ENCODE measurements at regions of chr1 and their contacts with region 1.

Region 1: GRCh38 chr1:175274368-175274767 is 81.8 kb upstream of the KIAA0040 start:
- DNase-seq: no peak
- ATAC-seq: no peak
- H3K4me3 ChIP-seq: no peak overlapping the region
- H3K27ac ChIP-seq: no peak overlapping the region
- H3K4me1 ChIP-seq: peaks cover 0 to 22% (median 4%) of the 10 kb centered on the region in 12 donors
- H3K27me3 ChIP-seq: no peaks in the 10 kb centered on the region
- CTCF ChIP-seq: no peak
- POLR2A ChIP-seq: no peak

Region 2: DNA sequence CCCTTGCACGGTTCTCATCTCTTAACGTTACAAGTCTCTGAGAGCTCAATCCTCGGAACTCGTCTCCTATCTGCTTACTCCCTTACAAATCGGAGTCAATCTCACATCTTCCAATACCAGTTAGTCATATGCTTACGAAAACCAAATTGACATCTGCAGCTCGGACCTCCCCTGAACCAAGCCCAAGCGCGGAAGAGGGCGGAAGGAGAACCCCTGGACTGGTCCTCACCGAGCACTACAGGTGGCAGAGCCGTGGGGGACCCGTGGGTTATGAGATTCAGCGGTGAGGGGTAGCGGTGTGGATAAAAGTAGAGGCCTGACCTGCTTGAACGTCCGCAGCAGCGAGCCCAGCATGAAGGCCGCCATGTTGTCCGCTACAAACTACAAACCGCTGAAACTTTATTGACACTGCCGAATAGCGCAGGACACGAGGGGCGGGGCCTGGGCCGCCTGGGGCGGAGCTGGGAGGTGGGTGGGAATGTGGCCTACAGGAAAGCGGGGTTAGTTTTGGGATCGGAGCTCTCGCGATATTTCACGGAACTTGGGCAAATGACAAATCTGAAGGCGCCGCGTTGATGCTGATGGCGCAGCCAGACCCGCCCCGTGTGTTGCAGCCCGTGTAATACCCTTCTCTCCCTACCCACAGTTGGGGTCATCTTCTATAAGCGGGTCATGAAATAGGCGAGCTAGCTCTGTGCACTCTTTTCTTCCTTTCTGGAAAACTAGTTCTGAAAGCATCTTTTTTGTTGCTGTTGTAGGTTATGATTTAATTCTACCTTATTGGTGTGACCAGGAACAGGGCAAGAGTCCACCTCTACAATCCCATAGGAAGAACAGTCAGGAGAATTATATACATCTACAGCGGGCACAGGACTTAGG is 251.1 kb before region 1 on chr1 and contains the start of gene MRPS14:
- intact Hi-C with region 1: no loop called
- DNase-seq: peak; percentile 97 to 98 (median 98)
- ATAC-seq: peak; percentile 97 to 100 (median 99)
- H3K4me3 ChIP-seq: peak within 1 kb of the TSS; percentile 70 to 96 (median 92)
- H3K27ac ChIP-seq: peak within 1 kb of the TSS; percentile 54 to 90 (median 81)
- H3K4me1 ChIP-seq: peaks cover 0 to 27% (median 16%) of the 10 kb centered on the region in 12 donors
- H3K27me3 ChIP-seq: no peaks in the 10 kb centered on the region
- CTCF ChIP-seq: no peak
- POLR2A ChIP-seq: peak in 1 of 2 donors; percentile 70
- total RNA-seq, gene MRPS14: 15.5 to 27.0 (median 22.7) TPM

Region 3: DNA sequence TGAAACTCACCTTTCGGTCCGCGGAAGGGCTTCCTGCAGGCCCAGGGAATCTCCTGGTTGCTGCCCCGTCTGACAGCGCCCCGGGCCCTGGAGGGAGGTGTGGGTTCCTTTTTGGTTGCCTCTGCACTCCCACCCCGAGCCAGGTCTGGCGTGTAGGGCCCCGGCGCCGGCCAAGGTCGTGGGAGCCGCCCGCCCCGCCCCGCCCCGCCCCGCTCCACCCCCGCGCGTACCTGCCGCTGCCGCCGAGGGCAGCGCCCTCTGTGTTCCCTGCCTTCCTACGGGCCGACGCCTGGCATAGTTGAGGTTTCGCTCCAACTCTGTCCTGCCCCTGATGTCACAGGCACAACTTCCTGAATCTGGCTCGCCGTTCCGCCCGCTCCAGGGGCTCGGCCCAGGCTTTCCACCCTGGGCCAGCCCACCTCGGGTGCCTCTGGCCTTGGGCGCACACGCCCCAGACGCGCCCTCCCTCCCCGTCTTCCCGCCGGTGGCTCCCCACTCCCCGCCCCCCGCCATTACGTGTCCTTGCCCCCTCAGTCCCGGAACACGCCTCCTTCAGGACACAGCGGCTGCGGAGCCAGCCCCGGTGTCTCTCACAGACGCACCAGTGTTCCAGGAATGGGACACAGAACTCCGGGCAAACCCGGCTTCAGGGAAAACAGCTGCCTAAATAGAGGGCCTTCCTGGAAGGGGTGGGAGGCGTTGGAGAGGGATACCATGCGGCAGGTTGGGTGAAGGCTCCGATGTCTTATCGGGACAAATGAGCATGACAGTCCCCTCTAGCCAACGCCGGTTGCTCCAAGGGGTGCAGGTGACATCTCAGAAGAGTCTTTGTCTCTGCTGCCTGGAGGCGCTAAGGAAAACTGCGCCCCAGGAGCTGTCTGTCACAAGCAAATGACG is 81.5 kb before region 1 on chr1 and contains the start of gene KIAA0040:
- intact Hi-C with region 1: loop called in 1 of 10 experiments (anchors 5 kb)
- DNase-seq: peak; percentile 79 to 90 (median 86)
- ATAC-seq: peak; percentile 83 to 90 (median 86)
- H3K4me3 ChIP-seq: peak within 1 kb of the TSS; percentile 57 to 93 (median 74)
- H3K27ac ChIP-seq: peak within 1 kb of the TSS; percentile 84 to 95 (median 90)
- H3K4me1 ChIP-seq: peaks cover 0 to 53% (median 31%) of the 10 kb centered on the region in 12 donors
- H3K27me3 ChIP-seq: no peaks in the 10 kb centered on the region
- CTCF ChIP-seq: peak in 5 of 12 donors; percentile 19 to 40 (median 30)
- POLR2A ChIP-seq: peak in 1 of 2 donors; percentile 28
- total RNA-seq, gene KIAA0040: 10.0 to 45.3 (median 12.9) TPM

Region 4: GRCh38 chr1:175390081-175390481 is 115.7 kb after region 1 on chr1:
- intact Hi-C with region 1: no loop called
- DNase-seq: no peak
- ATAC-seq: peak in 1 of 4 donors; percentile 47
- H3K4me3 ChIP-seq: no peak overlapping the region
- H3K27ac ChIP-seq: no peak overlapping the region
- H3K4me1 ChIP-seq: no peaks in the 10 kb centered on the region
- H3K27me3 ChIP-seq: peaks cover 0 to 3% (median 0%) of the 10 kb centered on the region in 9 donors
- CTCF ChIP-seq: no peak
- POLR2A ChIP-seq: no peak

Measured in heart left ventricle (tissue), 16 donors.